ENCODE measurements at regions of chr12 and their contacts with region 1.

Region 1: DNA sequence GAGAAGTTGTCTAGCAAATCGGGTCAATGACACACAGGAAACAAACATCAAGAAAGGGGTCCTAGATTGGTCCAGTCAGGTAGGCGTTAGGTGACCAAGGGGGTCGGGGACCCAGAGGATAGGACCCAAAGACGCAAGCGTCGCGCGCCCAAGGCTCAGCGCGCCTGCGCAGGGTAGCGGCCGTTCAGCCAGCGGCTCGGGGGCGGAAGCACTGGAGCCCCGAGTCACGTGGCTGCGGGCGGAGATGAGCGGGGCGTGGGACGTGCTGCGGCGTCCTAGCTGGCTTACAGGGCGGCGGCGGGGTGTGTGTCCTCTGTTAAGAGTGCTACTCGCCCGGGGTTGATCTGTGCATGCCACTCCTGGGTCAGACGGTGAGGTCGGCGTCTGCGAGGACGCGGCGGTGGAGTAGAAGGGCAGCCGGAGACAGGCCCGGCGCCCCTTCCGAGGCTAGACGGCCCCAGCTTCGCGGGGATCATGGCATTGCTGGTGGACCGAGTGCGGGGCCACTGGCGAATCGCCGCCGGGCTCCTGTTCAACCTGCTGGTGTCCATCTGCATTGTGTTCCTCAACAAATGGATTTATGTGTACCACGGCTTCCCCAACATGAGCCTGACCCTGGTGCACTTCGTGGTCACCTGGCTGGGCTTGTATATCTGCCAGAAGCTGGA is at the start of gene SLC35E3:
- DNase-seq: peak; percentile 91 to 96 (median 95)
- H3K4me3 ChIP-seq: peak within 1 kb of the TSS; percentile 54 to 97 (median 85)
- H3K27ac ChIP-seq: peak within 1 kb of the TSS; percentile 19 to 94 (median 86)
- H3K27me3 ChIP-seq: no peaks in the 10 kb centered on the region
- CTCF ChIP-seq: peak in 31 of 56 donors; percentile 4 to 64 (median 28)
- total RNA-seq, gene SLC35E3: 11.5 to 32.1 (median 18.4) TPM

Region 2: GRCh38 chr12:68610370-68611093 is 135.5 kb before region 1 on chr12 and contains the start of gene RAP1B:
- intact Hi-C with region 1: loop called (anchors 2 to 5 kb)
- DNase-seq: peak; percentile 77 to 96 (median 90)
- H3K4me3 ChIP-seq: peak within 1 kb of the TSS; percentile 57 to 94 (median 82)
- H3K27ac ChIP-seq: peak within 1 kb of the TSS; percentile 60 to 97 (median 89)
- H3K27me3 ChIP-seq: no peaks in the 10 kb centered on the region
- CTCF ChIP-seq: peak in 16 of 56 donors; percentile 2 to 34 (median 18)
- total RNA-seq, gene RAP1B: 39.9 to 92.7 (median 63.1) TPM

Region 3: GRCh38 chr12:68686595-68687521 is 59.2 kb before region 1 on chr12 and contains the start of gene NUP107:
- intact Hi-C with region 1: loop called (anchors 1 to 5 kb)
- DNase-seq: peak; percentile 92 to 98 (median 94)
- H3K4me3 ChIP-seq: peak within 1 kb of the TSS; percentile 61 to 100 (median 93)
- H3K27ac ChIP-seq: peak within 1 kb of the TSS in 58 of 59 donors; percentile 38 to 93 (median 82)
- H3K27me3 ChIP-seq: no peaks in the 10 kb centered on the region
- CTCF ChIP-seq: peak in 46 of 56 donors; percentile 12 to 57 (median 34)
- total RNA-seq, gene NUP107: 15.0 to 41.1 (median 24.5) TPM

Region 4: DNA sequence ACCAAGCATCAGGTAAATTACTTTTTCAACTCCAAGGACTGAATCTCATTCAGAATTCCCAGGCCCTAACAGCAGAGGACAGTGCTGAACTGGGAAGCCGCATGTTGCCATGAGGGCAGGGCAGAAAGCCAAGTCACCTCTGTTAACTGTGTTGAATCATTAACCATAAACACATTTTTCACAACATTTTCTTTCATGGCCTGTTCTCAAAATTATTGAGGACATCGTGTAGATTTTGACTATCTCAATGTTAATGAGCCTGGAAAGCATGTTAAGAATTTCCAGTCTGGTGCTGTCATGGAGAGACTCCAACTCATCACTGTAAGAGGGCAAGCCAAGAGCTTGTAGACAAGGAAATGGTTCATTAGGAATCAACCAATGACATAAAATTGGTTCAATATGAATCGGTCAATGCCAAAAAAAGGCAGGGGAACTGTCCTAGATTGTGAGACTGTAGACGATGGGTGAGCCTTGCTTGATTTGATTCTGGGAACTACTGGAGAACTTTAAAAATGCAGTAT is 153.3 kb after region 1 on chr12:
- intact Hi-C with region 1: no loop called
- DNase-seq: peak in 2 of 10 donors; percentile 19 to 34
- H3K4me3 ChIP-seq: no peak overlapping the region
- H3K27ac ChIP-seq: peak overlapping the region in 15 of 59 donors; percentile 0 to 50 (median 14)
- H3K27me3 ChIP-seq: no peaks in the 10 kb centered on the region
- CTCF ChIP-seq: peak in 45 of 56 donors; percentile 8 to 66 (median 39)

Region 5: DNA sequence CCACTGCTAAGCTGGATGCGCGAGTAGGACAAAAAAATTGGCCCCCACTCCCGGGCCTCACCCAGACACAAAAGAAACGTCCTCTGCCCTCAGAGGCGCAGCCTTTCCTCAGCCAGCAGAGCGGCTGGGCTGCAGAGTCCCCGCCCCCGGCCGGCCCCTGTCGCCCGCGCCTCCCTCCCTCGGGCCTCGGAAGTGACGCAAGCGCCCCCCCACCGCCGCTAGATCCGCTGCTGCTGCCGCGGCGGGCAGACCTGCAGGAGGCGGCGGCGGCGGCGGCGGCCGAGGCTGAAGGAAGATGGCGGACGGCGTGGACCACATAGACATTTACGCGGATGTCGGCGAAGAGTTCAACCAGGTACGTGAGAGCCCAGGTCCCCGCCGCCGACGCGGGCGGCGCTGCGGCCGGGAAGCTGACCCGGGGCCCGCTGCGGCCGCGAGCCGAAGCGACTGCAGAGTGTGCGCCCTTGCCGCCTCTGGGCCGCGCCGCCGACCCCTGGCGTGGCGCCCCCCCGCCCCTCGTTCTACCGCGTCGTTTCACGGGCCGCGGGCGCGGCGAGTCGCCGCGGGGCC is 493.4 kb after region 1 on chr12 and contains the start of gene CPSF6:
- intact Hi-C with region 1: loop called in 1 of 2 experiments (anchors 10 kb)
- DNase-seq: peak; percentile 89 to 98 (median 95)
- H3K4me3 ChIP-seq: peak within 1 kb of the TSS; percentile 43 to 95 (median 84)
- H3K27ac ChIP-seq: peak within 1 kb of the TSS; percentile 72 to 98 (median 92)
- H3K27me3 ChIP-seq: no peaks in the 10 kb centered on the region
- CTCF ChIP-seq: peak in 41 of 56 donors; percentile 8 to 61 (median 34)
- total RNA-seq, gene CPSF6: 76.6 to 122 (median 94.4) TPM

Measured in dorsolateral prefrontal cortex (tissue), 120 donors.